ENCODE measurements at regions of chr19 and their contacts with region 1.

Region 1: DNA sequence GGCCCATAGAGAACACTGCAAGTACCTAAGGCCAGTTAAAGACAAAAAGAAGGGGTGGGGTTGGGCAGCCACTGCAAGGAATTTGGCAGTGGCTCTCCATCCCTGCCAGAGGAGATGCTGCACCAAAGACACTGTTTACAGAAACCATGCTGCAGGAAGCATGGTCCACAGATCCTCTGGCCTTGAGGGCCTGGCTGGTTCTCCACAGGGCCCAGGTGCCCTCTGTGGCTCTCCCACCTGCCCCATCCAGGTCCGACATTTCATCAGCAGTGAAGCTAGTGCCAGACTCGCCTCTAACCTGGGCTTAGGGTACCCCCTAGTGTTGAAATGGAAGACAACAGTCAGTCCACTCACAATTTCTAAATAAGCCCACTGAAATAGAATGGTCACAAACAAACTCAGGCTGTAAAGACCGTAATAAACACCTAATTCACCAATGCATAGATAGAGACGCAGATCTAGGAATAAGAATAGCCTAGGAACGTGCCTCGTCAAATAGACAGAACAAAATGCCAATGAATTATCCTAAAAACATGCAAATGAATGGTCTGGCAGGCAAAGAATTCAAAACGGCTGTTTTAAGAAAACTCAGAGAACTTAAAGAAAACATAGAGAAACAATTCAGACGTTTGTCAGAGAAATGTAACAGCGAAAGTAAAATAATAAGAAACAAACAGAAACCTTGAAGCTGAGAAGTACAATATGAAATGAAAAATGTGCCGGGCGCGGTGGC is 23.3 kb downstream of the LYPD4 start:
- DNase-seq: peak; percentile 66
- H3K4me3 Mint-ChIP-seq: no peak overlapping the region
- H3K27ac Mint-ChIP-seq: no peak overlapping the region
- H3K4me1 Mint-ChIP-seq: no peaks in the 10 kb centered on the region
- H3K27me3 Mint-ChIP-seq: peaks cover 45% of the 10 kb centered on the region
- CTCF ChIP-seq: peak; percentile 61

Region 2: GRCh38 chr19:41753936-41754529 is 67.1 kb before region 1 on chr19:
- CTCF ChIA-PET with region 1: interaction called, 4 read pairs
- POLR2A ChIA-PET with region 1: no interaction called
- intact Hi-C with region 1: loop called (anchors 2 kb)
- DNase-seq: peak; percentile 65
- H3K4me3 Mint-ChIP-seq: no peak overlapping the region
- H3K27ac Mint-ChIP-seq: no peak overlapping the region
- H3K4me1 Mint-ChIP-seq: peaks cover 5% of the 10 kb centered on the region
- H3K27me3 Mint-ChIP-seq: peaks cover 62% of the 10 kb centered on the region
- CTCF ChIP-seq: peak; percentile 76

Region 3: GRCh38 chr19:41837981-41838708 is 17.0 kb after region 1 on chr19:
- CTCF ChIA-PET with region 1: interaction called, 37 read pairs
- POLR2A ChIA-PET with region 1: interaction called, 3 read pairs
- intact Hi-C with region 1: no loop called
- DNase-seq: no peak
- H3K4me3 Mint-ChIP-seq: no peak overlapping the region
- H3K27ac Mint-ChIP-seq: no peak overlapping the region
- H3K4me1 Mint-ChIP-seq: no peaks in the 10 kb centered on the region
- H3K27me3 Mint-ChIP-seq: peaks cover 83% of the 10 kb centered on the region
- CTCF ChIP-seq: no peak

Measured in MCF 10A (cell line).